SK-N-SH (cell line): ENCODE measurements at regions of chr7 and their contacts with region 1.

Region 1: GRCh38 chr7:94042381-94042780 is 38.2 kb upstream of the BET1 start:
- DNase-seq: no peak
- H3K4me3 ChIP-seq: no peak overlapping the region
- H3K27ac ChIP-seq: no peak overlapping the region
- H3K4me1 ChIP-seq: no peaks in the 10 kb centered on the region
- H3K27me3 ChIP-seq: peaks cover 6% of the 10 kb centered on the region; the same call in 1 of the 2 replicates
- CTCF ChIP-seq: no peak
- EP300 ChIP-seq: no peak
- RAD21 ChIP-seq: no peak

Region 2: GRCh38 chr7:93551063-93551904 is 491.1 kb before region 1 on chr7:
- CTCF ChIA-PET with region 1: no interaction called
- POLR2A ChIA-PET with region 1: no interaction called
- DNase-seq: no peak
- H3K4me3 ChIP-seq: no peak overlapping the region; a peak in 1 of 4 replicates
- H3K27ac ChIP-seq: no peak overlapping the region
- H3K4me1 ChIP-seq: no peaks in the 10 kb centered on the region
- H3K27me3 ChIP-seq: no peaks in the 10 kb centered on the region
- CTCF ChIP-seq: peak; percentile 88
- EP300 ChIP-seq: no peak
- RAD21 ChIP-seq: peak; percentile 73

Region 3: GRCh38 chr7:94012746-94013145 is 29.6 kb before region 1 on chr7:
- CTCF ChIA-PET with region 1: no interaction called
- POLR2A ChIA-PET with region 1: no interaction called
- DNase-seq: peak; percentile 22
- H3K4me3 ChIP-seq: no peak overlapping the region
- H3K27ac ChIP-seq: no peak overlapping the region
- H3K4me1 ChIP-seq: no peaks in the 10 kb centered on the region
- H3K27me3 ChIP-seq: no peaks in the 10 kb centered on the region
- CTCF ChIP-seq: no peak
- EP300 ChIP-seq: no peak
- RAD21 ChIP-seq: no peak

Region 4: DNA sequence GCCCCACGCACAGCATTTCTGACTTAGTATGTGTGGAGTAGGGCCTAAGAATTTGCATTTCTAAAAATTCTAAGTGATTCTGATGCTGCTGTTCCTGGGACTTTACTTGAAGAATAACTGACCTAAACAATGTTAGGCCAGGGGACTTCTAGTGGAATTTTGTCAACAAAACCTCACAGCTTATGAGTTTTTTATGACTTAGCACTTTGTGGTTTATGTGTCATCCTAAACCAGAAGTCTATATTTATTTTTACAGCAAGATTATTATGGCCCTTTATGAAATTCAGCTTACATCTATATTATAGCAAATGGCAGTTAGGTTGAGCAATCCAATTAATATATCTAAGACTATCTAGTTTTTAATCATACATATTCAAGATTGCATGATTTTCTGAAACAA is 13.6 kb before region 1 on chr7:
- CTCF ChIA-PET with region 1: interaction called, 10 read pairs
- POLR2A ChIA-PET with region 1: no interaction called
- DNase-seq: no peak
- H3K4me3 ChIP-seq: no peak overlapping the region
- H3K27ac ChIP-seq: no peak overlapping the region
- H3K4me1 ChIP-seq: peaks cover 0 to 4% of the 10 kb centered on the region in 2 experiments; a peak in 1 of 4 replicates
- H3K27me3 ChIP-seq: no peaks in the 10 kb centered on the region
- CTCF ChIP-seq: no peak
- EP300 ChIP-seq: no peak
- RAD21 ChIP-seq: no peak

Region 5: DNA sequence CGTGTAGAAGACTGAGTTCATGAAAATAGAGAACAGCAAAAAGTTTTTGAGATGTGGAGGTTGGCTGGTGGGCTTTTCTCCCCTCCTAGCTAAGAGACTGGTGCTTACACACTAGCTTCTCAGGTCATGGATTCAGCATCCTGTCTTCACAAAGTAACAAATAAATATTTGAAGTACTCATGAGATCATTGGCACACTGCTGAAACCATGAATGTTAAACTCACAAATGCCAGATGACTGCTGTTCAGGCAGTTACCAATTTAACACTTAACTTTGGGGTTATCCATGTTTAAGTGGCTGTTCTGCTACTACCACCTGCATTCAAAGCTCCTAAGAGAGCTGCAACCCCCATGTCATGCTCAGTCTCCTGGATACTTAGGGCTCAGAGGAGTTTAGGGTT is 80.8 kb after region 1 on chr7:
- CTCF ChIA-PET with region 1: no interaction called
- POLR2A ChIA-PET with region 1: no interaction called
- DNase-seq: no peak
- H3K4me3 ChIP-seq: no peak overlapping the region
- H3K27ac ChIP-seq: no peak overlapping the region
- H3K4me1 ChIP-seq: no peaks in the 10 kb centered on the region; a peak in 1 of 4 replicates
- H3K27me3 ChIP-seq: no peaks in the 10 kb centered on the region
- CTCF ChIP-seq: no peak
- EP300 ChIP-seq: no peak
- RAD21 ChIP-seq: no peak